ENCODE measurements at regions of chr18 and their contacts with region 1.

Region 1: GRCh38 chr18:50581211-50581916 is 21.5 kb downstream of the MAPK4 start:
- DNase-seq: no peak

Region 2: DNA sequence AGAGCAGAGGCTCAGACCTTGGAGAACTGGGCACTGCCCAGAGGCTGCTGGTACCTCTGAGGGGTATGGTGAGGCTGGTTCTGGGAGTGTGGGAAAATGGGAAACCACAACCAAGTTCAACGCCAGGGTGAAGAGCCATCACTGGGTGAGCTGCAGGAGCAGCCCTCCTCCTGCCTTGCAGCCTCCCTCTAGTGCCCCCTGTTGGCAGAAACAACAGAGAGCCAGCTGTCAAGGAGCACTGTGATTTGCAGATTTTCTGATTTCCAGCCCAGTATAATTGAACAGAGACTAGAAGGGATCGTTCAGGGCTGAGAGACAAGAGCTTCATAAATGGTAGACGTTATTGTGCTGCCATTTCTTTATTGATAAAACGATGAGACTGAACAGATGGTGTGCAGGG is 29.0 kb after region 1 on chr18:
- intact Hi-C with region 1: loop called in 1 of 2 experiments (anchors 1 kb)
- DNase-seq: no peak